ENCODE measurements at regions of chr5 and their contacts with region 1.

Region 1: DNA sequence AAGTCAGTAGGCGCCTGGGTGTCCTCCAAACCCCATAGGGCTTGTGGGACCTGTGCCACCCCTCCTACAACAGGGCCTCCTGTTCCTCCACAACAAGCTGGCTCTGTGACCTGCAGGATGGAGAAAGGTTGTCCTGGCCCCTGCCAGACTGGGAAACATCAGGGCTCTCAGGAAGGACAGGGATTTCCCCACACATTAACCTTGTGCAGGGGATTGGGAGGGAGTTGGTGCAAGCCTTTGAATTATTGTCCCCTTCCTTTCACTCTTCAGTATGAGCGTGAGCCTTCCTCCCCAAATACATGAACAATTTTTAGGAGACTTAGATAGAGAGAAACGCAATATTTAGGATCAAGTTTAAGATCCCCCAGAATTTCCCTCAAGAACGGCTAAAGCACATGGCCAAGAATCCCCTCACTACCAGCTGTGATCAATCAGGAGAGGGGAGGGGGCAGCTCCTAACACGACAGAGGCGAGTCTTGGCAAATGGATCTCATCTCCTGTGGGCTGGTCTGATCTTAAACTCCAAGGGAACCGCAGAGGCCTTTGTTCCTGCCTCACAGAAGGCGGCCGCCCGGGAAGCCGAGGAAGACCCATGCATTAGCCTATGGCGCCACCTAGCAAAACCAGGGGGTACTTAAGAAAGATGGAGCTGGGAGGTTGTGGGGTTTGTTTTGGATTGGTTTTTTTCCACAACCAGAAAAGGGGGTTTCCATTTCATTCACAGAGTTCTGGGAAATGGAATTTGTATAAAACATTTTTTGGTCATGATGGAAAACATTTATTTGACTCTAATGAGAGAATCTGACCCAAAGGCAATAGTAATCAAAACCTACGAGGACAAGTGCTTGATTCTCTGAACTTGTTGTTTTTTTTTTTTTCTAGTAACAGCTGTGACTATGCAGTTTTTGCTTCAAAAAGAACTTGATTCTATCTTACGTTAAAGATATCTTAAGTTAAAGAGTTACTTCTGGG is 36.1 kb upstream of the OSMR start:
- DNase-seq: peak; percentile 78
- CTCF ChIP-seq: peak; percentile 64

Region 2: DNA sequence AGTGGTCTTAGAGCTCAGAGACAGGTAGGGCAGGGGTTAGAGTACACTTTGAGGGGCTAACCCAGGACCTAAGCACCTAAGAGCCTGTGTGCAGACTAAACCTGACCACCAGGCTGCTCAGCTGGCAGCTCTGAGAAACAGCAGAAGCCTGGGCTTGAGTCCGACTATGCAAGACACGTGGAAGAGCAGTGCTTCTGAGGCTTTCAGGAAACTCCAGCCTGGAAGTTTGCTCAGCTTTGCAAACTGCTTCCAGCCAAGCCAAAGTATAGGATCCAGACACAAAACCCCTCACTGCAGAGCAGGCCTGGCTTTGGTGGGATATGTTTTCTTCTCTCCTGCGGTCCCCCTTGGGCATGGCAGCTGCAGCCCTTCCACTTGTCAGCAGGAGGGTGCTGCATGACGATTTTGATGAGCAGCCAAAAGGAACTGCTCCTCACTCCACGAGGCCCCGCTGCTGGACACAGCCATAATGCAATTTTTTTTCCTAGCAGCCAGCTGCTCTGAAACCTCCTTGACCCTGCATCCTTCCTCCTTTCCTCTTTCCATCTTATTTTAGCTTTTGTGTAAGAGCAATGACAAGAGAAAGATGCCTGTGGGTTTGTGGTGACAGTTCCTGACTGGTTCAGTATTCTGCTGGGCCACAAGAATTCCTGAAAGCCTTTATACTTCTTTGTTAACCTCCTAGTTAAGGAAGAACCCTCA is 376.4 kb before region 1 on chr5:
- in situ Hi-C with region 1: loop called (anchors 10 kb)
- DNase-seq: no peak
- CTCF ChIP-seq: no peak

Measured in GM13976 (cell line).